Endothelial cell of umbilical vein (primary cell): ENCODE measurements at regions of chr9 and their contacts with region 1.

Region 1: DNA sequence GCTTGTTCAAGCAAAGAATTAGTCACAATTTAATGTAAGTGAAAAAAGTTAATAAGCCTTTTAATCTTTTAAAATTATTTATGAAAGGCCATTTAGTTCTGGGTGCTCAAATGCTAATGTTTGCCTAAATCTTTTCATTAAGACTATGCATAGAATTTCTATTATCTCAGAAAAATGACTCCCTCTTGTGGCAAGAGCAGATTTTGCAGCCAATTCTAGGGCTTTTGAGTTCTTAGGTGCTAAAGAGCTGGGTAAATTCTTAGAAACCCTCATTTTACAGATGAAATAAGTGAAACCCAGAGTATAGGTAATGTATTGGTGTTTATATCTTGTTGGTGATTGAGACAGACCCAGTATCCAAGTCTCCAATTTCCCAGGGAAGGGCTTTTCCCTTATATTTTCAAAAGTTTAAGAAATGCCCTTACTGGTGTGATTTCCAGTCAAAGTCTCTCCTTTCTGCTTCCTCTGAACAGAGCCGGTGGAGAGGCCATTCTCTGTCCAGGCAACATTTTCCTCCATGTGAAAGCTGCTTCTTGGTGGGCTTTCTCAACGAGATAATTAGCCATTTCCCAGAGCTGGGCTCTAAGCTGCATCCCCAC is 24.1 kb upstream of the PCSK5 start:
- DNase-seq: peak; percentile 66
- H3K4me3 ChIP-seq: no peak overlapping the region
- H3K27ac ChIP-seq: no peak overlapping the region
- H3K4me1 ChIP-seq: no peaks in the 10 kb centered on the region
- H3K27me3 ChIP-seq: peaks cover 5 to 6% of the 10 kb centered on the region in 2 experiments
- CTCF ChIP-seq: peak; percentile 38 to 53
- POLR2A ChIP-seq: no peak

Region 2: DNA sequence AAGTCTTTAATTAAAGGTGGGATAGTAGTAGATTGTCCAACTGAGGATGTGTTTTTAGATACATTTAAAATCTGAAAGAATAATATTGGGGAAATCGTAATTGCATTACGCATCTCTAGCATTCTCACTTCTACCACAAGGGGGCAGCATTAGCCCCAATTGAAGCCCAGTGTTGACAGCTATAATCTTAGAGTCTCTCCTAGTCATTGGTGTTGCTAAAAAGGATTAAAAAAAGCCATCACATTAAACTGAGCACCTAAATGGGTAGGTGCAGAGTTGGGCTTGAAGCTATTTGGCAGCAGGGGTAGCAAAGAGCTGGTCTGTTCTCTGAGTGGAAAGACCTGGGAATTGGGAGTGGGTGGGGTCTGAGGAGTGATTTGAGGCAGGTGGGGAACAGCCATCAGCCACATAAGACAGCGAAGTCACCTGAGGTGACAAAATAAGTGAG is 600.8 kb before region 1 on chr9:
- CTCF ChIA-PET with region 1: interaction called, 20 read pairs
- POLR2A ChIA-PET with region 1: no interaction called
- dilution Hi-C with region 1: no loop called
- intact Hi-C with region 1: loop called (anchors 2 kb)
- DNase-seq: peak; percentile 52
- H3K4me3 ChIP-seq: no peak overlapping the region
- H3K27ac ChIP-seq: no peak overlapping the region
- H3K4me1 ChIP-seq: no peaks in the 10 kb centered on the region
- H3K27me3 ChIP-seq: peaks cover 0 to 2% of the 10 kb centered on the region in 2 experiments
- CTCF ChIP-seq: peak; percentile 66 to 74
- POLR2A ChIP-seq: no peak

Region 3: GRCh38 chr9:75855509-75855908 is 10.9 kb before region 1 on chr9:
- CTCF ChIA-PET with region 1: interaction called, 21 read pairs
- POLR2A ChIA-PET with region 1: no interaction called
- dilution Hi-C with region 1: no loop called
- intact Hi-C with region 1: no loop called
- DNase-seq: peak; percentile 17
- H3K4me3 ChIP-seq: no peak overlapping the region
- H3K27ac ChIP-seq: no peak overlapping the region
- H3K4me1 ChIP-seq: no peaks in the 10 kb centered on the region
- H3K27me3 ChIP-seq: no peaks in the 10 kb centered on the region
- CTCF ChIP-seq: peak; percentile 4 to 27
- POLR2A ChIP-seq: no peak

Region 4: DNA sequence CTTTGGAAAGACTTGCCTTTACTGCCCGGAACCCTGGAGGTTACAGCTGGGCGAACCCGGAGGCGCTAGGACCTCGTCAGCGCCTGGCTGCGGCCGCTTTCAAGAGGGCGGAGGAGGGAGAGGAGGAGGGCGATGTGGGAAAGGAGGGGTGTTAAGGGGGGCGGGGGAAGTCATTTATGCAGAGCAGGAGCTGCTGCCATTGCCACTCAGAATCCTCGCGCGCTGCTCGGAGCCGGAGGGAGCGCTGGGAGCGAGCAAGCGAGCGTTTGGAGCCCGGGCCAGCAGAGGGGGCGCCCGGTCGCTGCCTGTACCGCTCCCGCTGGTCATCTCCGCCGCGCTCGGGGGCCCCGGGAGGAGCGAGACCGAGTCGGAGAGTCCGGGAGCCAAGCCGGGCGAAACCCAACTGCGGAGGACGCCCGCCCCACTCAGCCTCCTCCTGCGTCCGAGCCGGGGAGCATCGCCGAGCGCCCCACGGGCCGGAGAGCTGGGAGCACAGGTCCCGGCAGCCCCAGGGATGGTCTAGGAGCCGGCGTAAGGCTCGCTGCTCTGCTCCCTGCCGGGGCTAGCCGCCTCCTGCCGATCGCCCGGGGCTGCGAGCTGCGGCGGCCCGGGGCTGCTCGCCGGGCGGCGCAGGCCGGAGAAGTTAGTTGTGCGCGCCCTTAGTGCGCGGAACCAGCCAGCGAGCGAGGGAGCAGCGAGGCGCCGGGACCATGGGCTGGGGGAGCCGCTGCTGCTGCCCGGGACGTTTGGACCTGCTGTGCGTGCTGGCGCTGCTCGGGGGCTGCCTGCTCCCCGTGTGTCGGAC is 24.3 kb after region 1 on chr9 and contains the start of gene PCSK5:
- CTCF ChIA-PET with region 1: interaction called, 57 read pairs
- POLR2A ChIA-PET with region 1: no interaction called
- dilution Hi-C with region 1: no loop called
- intact Hi-C with region 1: loop called (anchors 2 kb)
- DNase-seq: peak; percentile 94
- H3K4me3 ChIP-seq: peak within 1 kb of the TSS; percentile 66 to 90 (median 87)
- H3K27ac ChIP-seq: peak within 1 kb of the TSS; percentile 39
- H3K4me1 ChIP-seq: peaks cover 18% of the 10 kb centered on the region
- H3K27me3 ChIP-seq: peaks cover 0 to 6% of the 10 kb centered on the region in 2 experiments
- CTCF ChIP-seq: peak; percentile 7 to 41
- POLR2A ChIP-seq: peak; percentile 71
- total RNA-seq, gene PCSK5: 4.8 and 5.1 TPM in 2 replicates